ENCODE measurements at regions of chr1 and their contacts with region 1.

Region 1: DNA sequence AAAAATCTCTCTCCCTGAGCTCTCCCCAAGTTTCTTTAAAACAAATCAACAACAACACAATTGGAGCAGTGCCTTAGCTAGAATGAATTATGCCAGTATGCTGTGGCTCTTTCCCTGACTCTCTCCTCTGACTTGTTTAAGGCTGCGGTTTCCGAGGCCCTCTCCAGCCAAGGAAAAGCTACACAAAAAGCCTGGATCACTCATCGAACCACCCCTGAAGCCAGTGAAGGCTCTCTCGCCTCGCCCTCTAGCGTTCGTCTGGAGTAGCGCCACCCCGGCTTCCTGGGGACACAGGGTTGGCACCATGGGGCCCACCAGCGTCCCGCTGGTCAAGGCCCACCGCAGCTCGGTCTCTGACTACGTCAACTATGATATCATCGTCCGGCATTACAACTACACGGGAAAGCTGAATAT is 1.9 kb downstream of the S1PR1 start:
- DNase-seq: peak; percentile 89 to 93
- ATAC-seq: peak; percentile 48 to 76 (median 66)
- H3K4me3 ChIP-seq: peak overlapping the region; percentile 56 to 90 (median 71)
- H3K27ac ChIP-seq: peak overlapping the region; percentile 43 to 99 (median 96)
- H3K4me1 ChIP-seq: peaks cover 0 to 58% (median 40%) of the 10 kb centered on the region in 9 donors
- H3K27me3 ChIP-seq: no peaks in the 10 kb centered on the region
- CTCF ChIP-seq: peak; percentile 86 to 97 (median 93)

Region 2: DNA sequence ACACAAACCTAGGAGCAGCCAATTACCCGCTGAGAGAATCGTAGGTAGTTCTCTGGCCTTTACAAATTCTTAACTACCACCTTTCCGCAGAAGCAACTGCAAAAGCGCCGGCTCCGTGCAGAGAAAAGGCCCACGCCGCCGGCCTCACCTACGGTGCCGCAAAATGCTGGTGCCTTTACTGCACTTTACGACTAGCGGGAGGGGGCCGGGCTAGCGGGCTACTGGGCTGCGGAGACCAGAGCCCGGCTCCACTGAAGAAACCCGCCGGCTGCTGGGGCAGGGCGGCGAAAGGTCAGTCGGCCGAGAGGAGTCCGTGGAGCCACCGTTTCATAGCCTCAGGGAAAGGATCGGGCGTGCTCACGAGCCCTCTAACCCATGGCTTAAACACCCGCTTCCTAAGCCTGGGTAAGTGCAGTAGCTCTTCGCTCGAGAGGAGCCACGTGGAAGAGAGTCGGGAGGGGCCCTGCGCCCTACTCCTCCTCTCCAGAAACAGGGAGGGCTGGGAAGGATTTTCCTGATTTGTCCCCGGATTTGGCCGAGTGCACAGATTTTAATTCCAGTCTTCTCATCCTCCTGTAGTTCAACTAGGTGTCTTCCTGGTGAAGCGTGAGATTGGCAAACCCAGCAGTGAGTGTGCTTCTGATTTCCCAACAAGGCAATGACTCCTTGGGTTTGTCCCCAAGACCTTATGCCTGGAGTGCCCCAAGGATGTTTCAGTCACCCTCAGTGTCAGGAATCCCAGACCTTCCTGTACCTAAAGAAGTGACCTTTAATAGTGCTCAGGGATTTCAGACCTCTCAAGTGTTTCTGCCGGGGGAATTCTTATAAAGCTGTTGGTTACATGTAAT is 212.8 kb before region 1 on chr1 and contains the start of gene DPH5:
- intact Hi-C with region 1: loop called in 7 of 10 experiments (anchors 2 to 10 kb)
- DNase-seq: peak; percentile 88 to 93
- ATAC-seq: peak; percentile 95 to 100 (median 98)
- H3K4me3 ChIP-seq: peak within 1 kb of the TSS; percentile 48 to 85 (median 71)
- H3K27ac ChIP-seq: peak within 1 kb of the TSS; percentile 42 to 93 (median 88)
- H3K4me1 ChIP-seq: peaks cover 2 to 44% (median 23%) of the 10 kb centered on the region in 9 donors
- H3K27me3 ChIP-seq: no peaks in the 10 kb centered on the region
- CTCF ChIP-seq: no peak
- total RNA-seq, gene DPH5: 30.6 to 44.3 (median 36.0) TPM

Region 3: GRCh38 chr1:101112051-101112780 is 126.5 kb before region 1 on chr1:
- intact Hi-C with region 1: loop called in 1 of 10 experiments (anchors 5 kb)
- DNase-seq: peak; percentile 48 to 61
- ATAC-seq: peak; percentile 83 to 95 (median 91)
- H3K4me3 ChIP-seq: no peak overlapping the region
- H3K27ac ChIP-seq: peak overlapping the region; percentile 20 to 81 (median 67)
- H3K4me1 ChIP-seq: peaks cover 0 to 38% (median 26%) of the 10 kb centered on the region in 9 donors
- H3K27me3 ChIP-seq: no peaks in the 10 kb centered on the region
- CTCF ChIP-seq: no peak

Region 4: DNA sequence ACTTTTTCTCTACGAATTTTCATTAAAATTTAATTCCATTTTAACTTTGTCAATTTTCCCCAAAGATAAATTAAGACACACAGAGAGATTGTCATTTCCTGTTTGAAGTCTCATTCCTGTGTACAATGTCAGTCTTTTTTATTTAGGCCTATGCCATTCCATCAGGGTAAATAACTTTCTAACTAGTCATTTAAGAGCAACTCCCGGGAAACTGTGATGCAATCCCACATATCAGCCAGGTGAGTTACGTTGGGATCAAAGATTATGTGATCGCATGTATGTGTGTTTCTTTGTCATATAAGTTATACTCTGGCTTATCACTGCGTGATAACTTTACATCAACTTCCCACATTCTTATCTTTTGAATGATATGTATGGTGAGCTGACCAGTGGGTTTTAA is 88.0 kb before region 1 on chr1:
- intact Hi-C with region 1: loop called in 1 of 10 experiments (anchors 5 kb)
- DNase-seq: no peak
- ATAC-seq: no peak
- H3K4me3 ChIP-seq: no peak overlapping the region
- H3K27ac ChIP-seq: peak overlapping the region in 7 of 10 donors; percentile 49 to 78 (median 61)
- H3K4me1 ChIP-seq: peaks cover 0 to 41% (median 20%) of the 10 kb centered on the region in 9 donors
- H3K27me3 ChIP-seq: no peaks in the 10 kb centered on the region
- CTCF ChIP-seq: no peak

Region 5: GRCh38 chr1:101167891-101168290 is 70.8 kb before region 1 on chr1:
- intact Hi-C with region 1: loop called in 3 of 10 experiments (anchors 5 to 10 kb)
- DNase-seq: no peak
- ATAC-seq: no peak
- H3K4me3 ChIP-seq: no peak overlapping the region
- H3K27ac ChIP-seq: no peak overlapping the region
- H3K4me1 ChIP-seq: peaks cover 0 to 37% (median 18%) of the 10 kb centered on the region in 9 donors
- H3K27me3 ChIP-seq: no peaks in the 10 kb centered on the region
- CTCF ChIP-seq: no peak

Region 6: GRCh38 chr1:101187297-101187696 is 51.4 kb before region 1 on chr1:
- intact Hi-C with region 1: loop called in 4 of 10 experiments (anchors 5 kb)
- DNase-seq: no peak
- ATAC-seq: peak in 6 of 8 donors; percentile 42 to 85 (median 67)
- H3K4me3 ChIP-seq: no peak overlapping the region
- H3K27ac ChIP-seq: peak overlapping the region in 9 of 10 donors; percentile 20 to 77 (median 70)
- H3K4me1 ChIP-seq: peaks cover 0 to 56% (median 11%) of the 10 kb centered on the region in 9 donors
- H3K27me3 ChIP-seq: no peaks in the 10 kb centered on the region
- CTCF ChIP-seq: no peak

Region 7: DNA sequence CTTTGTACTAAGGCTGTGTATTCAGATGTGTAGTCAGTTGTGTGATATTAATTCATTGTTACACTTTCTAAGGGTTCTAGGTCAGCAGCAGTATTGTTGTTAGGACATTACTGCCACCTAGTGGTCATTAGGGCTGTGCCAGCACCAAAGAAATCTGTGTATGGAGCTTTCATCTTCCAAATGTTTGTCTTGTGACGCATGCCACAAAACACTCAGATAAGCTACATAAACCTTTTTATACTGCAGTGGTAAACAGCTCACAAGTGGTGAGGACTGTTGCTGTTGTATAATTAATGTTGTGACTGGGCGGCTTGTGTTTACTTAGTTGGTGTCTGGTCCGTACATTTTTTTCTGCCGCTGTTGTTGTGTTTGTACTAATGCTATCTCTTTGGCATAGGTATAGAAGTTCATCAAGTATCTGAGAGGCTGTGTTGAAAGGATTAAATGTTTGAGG is 49.8 kb after region 1 on chr1:
- intact Hi-C with region 1: loop called in 5 of 10 experiments (anchors 1 to 5 kb)
- DNase-seq: peak in 1 of 2 donors; percentile 75
- ATAC-seq: peak; percentile 83 to 92 (median 90)
- H3K4me3 ChIP-seq: peak overlapping the region in 3 of 10 donors; percentile 6 to 28 (median 21)
- H3K27ac ChIP-seq: peak overlapping the region in 4 of 10 donors; percentile 0 to 49 (median 21)
- H3K4me1 ChIP-seq: peaks cover 0 to 44% (median 4%) of the 10 kb centered on the region in 9 donors
- H3K27me3 ChIP-seq: no peaks in the 10 kb centered on the region
- CTCF ChIP-seq: peak; percentile 86 to 97 (median 94)